ENCODE measurements at regions of chr9 and their contacts with region 1.

Region 1: GRCh38 chr9:22052376-22052945 is 43.4 kb upstream of the CDKN2B start:
- DNase-seq: peak in 2 of 3 donors; percentile 50 to 55
- H3K4me3 ChIP-seq: no peak overlapping the region
- H3K27ac ChIP-seq: no peak overlapping the region
- H3K4me1 ChIP-seq: peaks cover 7 to 21% (median 14%) of the 10 kb centered on the region in 4 experiments
- H3K27me3 ChIP-seq: peaks cover 7 to 73% (median 49%) of the 10 kb centered on the region in 5 experiments

Region 2: DNA sequence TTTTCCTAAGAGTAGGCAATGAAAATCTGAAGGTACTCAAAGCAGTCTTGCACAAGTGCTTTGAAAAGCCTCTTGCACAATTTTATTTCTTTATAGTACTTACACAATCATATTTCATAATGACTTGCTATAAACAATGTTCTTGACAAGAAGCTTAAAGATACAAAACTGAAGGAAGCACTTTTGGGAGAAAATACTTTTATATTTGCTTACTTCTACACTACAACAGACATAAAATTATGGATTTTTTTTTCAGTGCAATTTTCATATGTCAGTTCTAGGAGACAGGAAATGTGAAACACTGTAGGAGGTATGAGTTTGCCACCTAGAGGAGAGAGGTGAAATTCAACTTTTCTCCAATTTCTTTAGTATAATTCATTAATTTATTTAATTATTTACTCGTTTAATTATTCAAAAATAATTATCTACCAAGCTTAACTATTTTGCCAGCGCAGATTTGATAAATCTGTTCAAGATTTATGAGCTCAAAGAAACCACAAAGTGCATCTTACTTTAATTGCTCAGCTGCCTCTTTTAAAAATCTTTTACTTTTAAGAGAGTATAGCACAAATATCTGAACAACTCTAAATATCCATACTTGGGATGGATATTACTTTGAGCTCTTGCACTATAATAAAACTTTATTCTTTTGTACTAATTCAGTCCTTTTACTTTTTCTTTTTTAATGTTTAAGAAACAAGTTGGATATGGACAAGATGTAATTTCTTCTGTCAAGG is 14.3 kb before region 1 on chr9:
- CTCF ChIA-PET with region 1: interaction called, 26 read pairs
- POLR2A ChIA-PET with region 1: no interaction called
- DNase-seq: peak; percentile 14 to 32 (median 31)
- H3K4me3 ChIP-seq: no peak overlapping the region
- H3K27ac ChIP-seq: no peak overlapping the region
- H3K4me1 ChIP-seq: no peaks in the 10 kb centered on the region
- H3K27me3 ChIP-seq: peaks cover 11 to 80% (median 46%) of the 10 kb centered on the region in 5 experiments